ENCODE measurements at regions of chr16 and their contacts with region 1.

Region 1: GRCh38 chr16:69301861-69302260 is 9.3 kb upstream of the VPS4A start:
- DNase-seq: no peak
- H3K4me3 ChIP-seq: no peak overlapping the region
- CTCF ChIP-seq: no peak

Region 2: DNA sequence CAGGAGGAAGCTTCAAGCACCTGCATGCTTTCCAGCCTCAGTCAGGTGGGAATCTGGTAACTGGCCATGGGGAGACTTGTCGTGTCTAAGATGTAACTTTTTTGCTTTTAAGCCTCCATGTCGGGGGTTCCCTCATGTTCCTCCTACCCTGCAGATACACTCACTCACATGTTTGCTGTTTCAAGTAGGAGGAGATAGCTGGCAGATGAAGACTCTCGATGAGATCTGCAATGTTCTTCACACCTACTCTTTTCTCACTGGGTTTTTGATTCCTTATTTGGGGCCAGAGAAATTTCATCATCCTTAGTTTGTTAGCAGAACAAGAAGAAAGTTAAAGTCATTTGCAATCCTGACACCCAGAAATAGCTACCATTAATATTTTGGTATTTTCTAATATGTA is 144.7 kb before region 1 on chr16:
- in situ Hi-C with region 1: loop called (anchors 5 kb)
- DNase-seq: no peak
- H3K4me3 ChIP-seq: no peak overlapping the region
- CTCF ChIP-seq: no peak

Region 3: DNA sequence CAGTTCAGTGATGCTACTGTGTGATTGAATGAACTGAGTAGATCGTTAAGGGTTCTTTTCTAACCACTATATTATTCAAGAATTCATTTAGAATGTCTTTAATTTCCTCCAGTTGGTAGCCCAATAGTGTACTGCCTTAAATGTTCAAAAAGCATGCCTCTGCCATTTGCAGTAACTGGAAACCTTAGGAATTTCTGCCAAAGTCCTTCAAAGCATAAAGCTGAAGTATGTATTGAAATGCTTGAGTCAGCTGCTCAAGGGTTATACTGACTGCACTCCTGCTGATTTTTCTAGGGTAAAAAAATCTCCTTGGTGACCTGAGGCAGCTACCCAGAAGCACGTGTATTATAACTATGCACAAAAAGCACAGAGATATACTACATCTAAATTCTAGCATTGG is 58.4 kb before region 1 on chr16:
- in situ Hi-C with region 1: loop called (anchors 5 kb)
- DNase-seq: peak; percentile 83
- H3K4me3 ChIP-seq: no peak overlapping the region
- CTCF ChIP-seq: no peak

Region 4: DNA sequence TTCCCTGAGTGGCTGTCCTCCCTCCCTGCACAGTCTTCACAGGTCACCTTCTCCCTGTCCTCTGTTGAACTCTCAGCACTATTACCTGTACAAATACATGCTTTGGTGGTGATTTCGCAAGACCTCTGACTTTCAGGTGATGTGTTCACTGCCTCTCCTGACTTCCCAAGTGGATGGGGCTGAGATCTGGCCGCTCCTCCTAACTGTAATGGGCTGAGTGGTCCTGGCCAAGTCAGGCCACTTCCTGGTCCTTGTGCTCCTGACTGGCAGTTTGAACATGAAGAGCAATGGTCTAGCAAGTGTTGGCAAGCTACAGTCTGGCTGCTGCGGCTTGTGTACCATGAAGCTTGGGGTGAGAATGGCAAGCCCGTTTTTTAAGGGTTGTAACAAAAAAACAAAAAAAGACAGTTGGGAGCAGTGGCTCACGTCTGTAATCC is 61.4 kb after region 1 on chr16:
- in situ Hi-C with region 1: no loop called
- DNase-seq: no peak
- H3K4me3 ChIP-seq: no peak overlapping the region
- CTCF ChIP-seq: no peak